ENCODE measurements at regions of chr12 and their contacts with region 1.

Region 1: GRCh38 chr12:51047655-51048540 is at the start of gene LETMD1:
- DNase-seq: peak; percentile 94 to 96
- ATAC-seq: peak; percentile 99
- H3K4me3 ChIP-seq: peak within 1 kb of the TSS; percentile 68 to 84
- H3K27ac ChIP-seq: peak within 1 kb of the TSS in 1 of 2 donors; percentile 97
- H3K4me1 ChIP-seq: peaks cover 0 to 5% of the 10 kb centered on the region in 2 donors
- H3K27me3 ChIP-seq: no peaks in the 10 kb centered on the region
- total RNA-seq, gene LETMD1: 32.6 to 62.3 TPM

Region 2: DNA sequence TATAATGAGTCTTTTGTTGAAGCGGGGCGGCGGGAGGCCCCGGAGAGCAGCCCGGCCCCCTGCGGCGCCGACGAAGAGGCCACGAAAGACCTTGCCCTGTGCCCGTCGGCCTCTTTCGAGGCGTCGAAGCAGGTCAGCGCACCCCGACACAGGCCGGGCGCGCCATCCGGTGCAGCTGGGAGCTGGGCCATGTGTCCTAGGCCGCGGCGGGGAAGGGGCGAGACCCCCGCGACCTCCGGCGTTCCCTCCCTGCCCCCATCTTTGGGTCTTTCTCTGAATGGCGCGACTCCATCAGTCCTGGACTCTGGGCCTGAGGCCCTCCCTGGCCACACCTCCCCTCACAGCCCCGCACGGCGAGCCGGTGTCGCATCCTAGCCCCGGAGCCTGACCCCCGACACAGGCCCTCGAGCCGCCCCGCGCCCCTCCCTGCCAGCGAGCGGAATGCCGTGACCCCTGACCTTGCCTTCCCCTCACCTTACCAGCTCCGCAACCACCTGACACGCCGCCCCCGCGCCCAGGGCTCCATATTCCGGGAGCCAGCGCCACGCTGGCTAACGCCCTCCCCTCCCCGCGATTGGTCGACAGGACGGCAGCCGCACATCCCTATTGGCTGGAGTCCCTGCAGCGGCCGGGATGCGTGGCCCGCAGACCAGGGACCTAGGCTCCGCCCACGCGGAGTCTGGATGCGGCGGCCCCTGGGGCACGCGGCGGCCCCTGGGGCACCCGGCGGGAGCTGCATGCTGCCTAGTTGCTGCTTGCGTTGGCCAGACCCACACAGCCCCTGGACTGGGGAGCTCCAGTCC is 21.9 kb before region 1 on chr12 and contains the start of gene SLC11A2:
- intact Hi-C with region 1: loop called in 1 of 2 experiments (anchors 1 kb)
- DNase-seq: peak; percentile 98
- ATAC-seq: peak; percentile 98
- H3K4me3 ChIP-seq: peak within 1 kb of the TSS; percentile 57 to 59
- H3K27ac ChIP-seq: peak within 1 kb of the TSS; percentile 91 to 98
- H3K4me1 ChIP-seq: no peaks in the 10 kb centered on the region
- H3K27me3 ChIP-seq: no peaks in the 10 kb centered on the region
- total RNA-seq, gene SLC11A2: 71.9 to 97.2 TPM

Region 3: GRCh38 chr12:51083126-51083833 is 35.4 kb after region 1 on chr12 and contains the start of gene CSRNP2:
- intact Hi-C with region 1: loop called in 1 of 2 experiments (anchors 5 kb)
- DNase-seq: peak; percentile 98 to 99
- ATAC-seq: peak; percentile 100
- H3K4me3 ChIP-seq: peak within 1 kb of the TSS; percentile 78 to 88
- H3K27ac ChIP-seq: peak within 1 kb of the TSS; percentile 62 to 79
- H3K4me1 ChIP-seq: no peaks in the 10 kb centered on the region
- H3K27me3 ChIP-seq: no peaks in the 10 kb centered on the region
- total RNA-seq, gene CSRNP2: 32.3 to 34.5 TPM

Region 4: GRCh38 chr12:51341259-51342007 is 293.5 kb after region 1 on chr12:
- intact Hi-C with region 1: loop called in 1 of 2 experiments (anchors 10 kb)
- DNase-seq: peak in 1 of 2 donors; percentile 78
- ATAC-seq: peak; percentile 87
- H3K4me3 ChIP-seq: no peak overlapping the region
- H3K27ac ChIP-seq: no peak overlapping the region
- H3K4me1 ChIP-seq: no peaks in the 10 kb centered on the region
- H3K27me3 ChIP-seq: no peaks in the 10 kb centered on the region